ENCODE measurements at regions of chr11 and their contacts with region 1.

Region 1: GRCh38 chr11:30322826-30323710 is at the start of gene ARL14EP:
- DNase-seq: peak; percentile 72 to 96
- H3K4me3 ChIP-seq: peak within 1 kb of the TSS; percentile 73 to 82
- H3K27ac ChIP-seq: peak within 1 kb of the TSS; percentile 81 to 86
- H3K4me1 ChIP-seq: peaks cover 0 to 12% of the 10 kb centered on the region in 2 donors
- H3K27me3 ChIP-seq: no peaks in the 10 kb centered on the region
- CTCF ChIP-seq: peak in 1 of 3 experiments; percentile 16
- total RNA-seq, gene ARL14EP: 4.2 TPM

Region 2: DNA sequence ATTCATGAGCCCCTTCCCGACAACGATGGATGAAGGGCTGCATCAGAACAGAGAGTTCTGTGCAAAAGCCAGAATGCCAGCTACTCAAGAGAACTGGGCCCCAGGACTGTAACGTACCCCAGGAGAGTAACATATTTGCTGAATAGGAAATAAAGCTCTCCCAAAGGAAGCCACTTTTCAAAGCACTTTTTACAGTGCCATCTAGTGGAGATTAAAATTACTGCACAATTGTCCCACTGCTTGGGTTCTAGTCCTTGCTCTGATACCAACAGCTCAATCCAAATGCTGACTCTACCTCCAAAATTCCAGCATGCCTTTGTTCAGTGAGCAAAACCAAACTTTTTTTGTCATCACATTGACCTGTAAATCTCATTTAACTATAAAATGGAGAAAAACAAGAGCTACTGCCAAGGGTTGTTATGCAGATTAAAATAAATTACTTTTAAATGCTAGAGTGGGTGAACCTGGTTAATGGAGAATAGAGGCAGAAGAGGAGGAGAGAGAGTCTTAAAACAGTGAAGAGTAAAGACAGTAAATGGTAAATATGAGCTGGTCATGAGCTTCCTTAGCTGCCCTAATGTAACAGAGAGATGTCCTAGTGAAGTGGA is 179.9 kb before region 1 on chr11:
- intact Hi-C with region 1: no loop called
- DNase-seq: no peak
- H3K4me3 ChIP-seq: no peak overlapping the region
- H3K27ac ChIP-seq: no peak overlapping the region
- H3K4me1 ChIP-seq: no peaks in the 10 kb centered on the region
- H3K27me3 ChIP-seq: no peaks in the 10 kb centered on the region
- CTCF ChIP-seq: peak in 2 of 3 experiments; percentile 47 to 51

Region 3: GRCh38 chr11:30342736-30343166 is 19.7 kb after region 1 on chr11:
- intact Hi-C with region 1: no loop called
- DNase-seq: no peak
- H3K4me3 ChIP-seq: no peak overlapping the region
- H3K27ac ChIP-seq: no peak overlapping the region
- H3K4me1 ChIP-seq: no peaks in the 10 kb centered on the region
- H3K27me3 ChIP-seq: no peaks in the 10 kb centered on the region
- CTCF ChIP-seq: no peak

Region 4: DNA sequence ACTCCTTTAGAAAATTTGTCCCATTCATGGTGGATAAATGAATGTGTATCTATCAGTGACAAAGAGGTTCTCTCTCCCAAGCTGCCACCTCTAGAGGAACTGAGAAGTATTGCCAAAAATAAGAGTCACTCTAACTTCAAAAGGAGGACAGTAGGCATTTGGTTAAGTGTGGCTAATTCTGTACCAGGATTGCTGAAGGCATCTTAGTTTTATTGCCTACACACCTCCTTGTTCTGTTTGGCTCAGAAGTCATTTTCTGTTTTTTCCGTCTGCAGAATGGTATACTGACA is 452.1 kb after region 1 on chr11:
- intact Hi-C with region 1: loop called (anchors 10 kb)
- DNase-seq: no peak
- H3K4me3 ChIP-seq: no peak overlapping the region
- H3K27ac ChIP-seq: peak overlapping the region in 1 of 2 donors; percentile 35
- H3K4me1 ChIP-seq: peaks cover 0 to 15% of the 10 kb centered on the region in 2 donors
- H3K27me3 ChIP-seq: no peaks in the 10 kb centered on the region
- CTCF ChIP-seq: no peak

Region 5: GRCh38 chr11:31477528-31478222 is 1154.6 kb after region 1 on chr11:
- intact Hi-C with region 1: no loop called
- DNase-seq: no peak
- H3K4me3 ChIP-seq: no peak overlapping the region
- H3K27ac ChIP-seq: no peak overlapping the region
- H3K4me1 ChIP-seq: no peaks in the 10 kb centered on the region
- H3K27me3 ChIP-seq: no peaks in the 10 kb centered on the region
- CTCF ChIP-seq: no peak

Measured in ascending aorta (tissue), 2 donors.